ENCODE measurements at regions of chr1 and their contacts with region 1.

Region 1: DNA sequence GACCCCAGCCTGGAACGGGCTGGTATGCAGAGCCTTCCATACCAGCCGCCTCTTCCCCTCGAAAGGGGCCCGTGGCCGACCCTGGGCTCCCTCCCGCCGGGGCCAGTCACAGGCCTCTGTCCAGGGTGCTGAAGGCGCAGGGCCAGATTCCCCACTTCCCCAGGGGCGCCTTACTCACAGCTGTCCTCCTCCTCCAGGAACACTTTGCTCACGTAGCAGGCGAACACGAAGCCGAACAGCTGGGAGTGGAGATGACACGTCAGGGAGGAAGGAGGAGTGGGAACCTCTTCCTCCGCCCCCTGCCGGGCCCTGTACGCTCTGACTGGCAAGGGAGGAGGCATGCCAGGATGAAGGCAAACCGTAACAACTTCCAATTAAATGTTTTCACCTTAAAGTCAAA is 57.3 kb downstream of the NKAIN1 start:
- DNase-seq: peak in 1 of 2 experiments; percentile 95
- H3K4me3 ChIP-seq: peak overlapping the region in 1 of 4 experiments; percentile 44; a peak in 2 of 8 replicates
- H3K27ac ChIP-seq: no peak overlapping the region
- H3K4me1 ChIP-seq: no peaks in the 10 kb centered on the region
- H3K27me3 ChIP-seq: no peaks in the 10 kb centered on the region
- CTCF ChIP-seq: no peak
- EP300 ChIP-seq: no peak
- POLR2A ChIP-seq: no peak
- RAD21 ChIP-seq: no peak; a peak in 1 of 4 replicates

Region 2: DNA sequence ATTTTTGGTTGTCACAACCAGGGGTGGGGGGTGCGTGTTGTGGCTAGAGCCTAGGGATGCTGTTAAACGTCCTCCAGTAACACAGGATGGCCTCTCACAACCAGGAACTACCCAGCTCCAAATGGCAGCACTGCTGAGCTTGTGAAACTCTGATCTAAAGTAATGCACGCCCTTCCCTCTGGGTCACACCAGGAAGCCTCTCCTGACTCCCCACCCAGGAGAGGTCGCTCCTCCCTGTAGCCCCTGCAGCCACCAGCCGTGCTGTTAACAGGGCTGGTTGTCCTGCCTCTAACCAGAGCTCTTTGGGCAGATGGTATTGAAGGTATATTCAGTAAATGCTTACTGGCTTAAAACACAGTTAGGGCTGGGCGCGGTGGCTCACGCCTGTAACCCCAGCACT is 15.9 kb before region 1 on chr1:
- CTCF ChIA-PET with region 1: interaction called, 156 read pairs
- POLR2A ChIA-PET with region 1: interaction called, 4 read pairs
- DNase-seq: no peak
- H3K4me3 ChIP-seq: no peak overlapping the region
- H3K27ac ChIP-seq: no peak overlapping the region
- H3K4me1 ChIP-seq: peaks cover 0 to 7% (median 0%) of the 10 kb centered on the region in 4 experiments; a peak in 2 of 7 replicates
- H3K27me3 ChIP-seq: no peaks in the 10 kb centered on the region
- CTCF ChIP-seq: no peak
- EP300 ChIP-seq: no peak
- POLR2A ChIP-seq: no peak
- RAD21 ChIP-seq: no peak

Region 3: GRCh38 chr1:31216016-31216415 is 33.7 kb after region 1 on chr1:
- CTCF ChIA-PET with region 1: interaction called, 53 read pairs
- POLR2A ChIA-PET with region 1: no interaction called
- DNase-seq: no peak
- H3K4me3 ChIP-seq: no peak overlapping the region
- H3K27ac ChIP-seq: no peak overlapping the region
- H3K4me1 ChIP-seq: peaks cover 0 to 9% (median 2%) of the 10 kb centered on the region in 4 experiments; a peak in 5 of 7 replicates
- H3K27me3 ChIP-seq: no peaks in the 10 kb centered on the region
- CTCF ChIP-seq: no peak
- EP300 ChIP-seq: no peak
- POLR2A ChIP-seq: no peak
- RAD21 ChIP-seq: no peak

Region 4: DNA sequence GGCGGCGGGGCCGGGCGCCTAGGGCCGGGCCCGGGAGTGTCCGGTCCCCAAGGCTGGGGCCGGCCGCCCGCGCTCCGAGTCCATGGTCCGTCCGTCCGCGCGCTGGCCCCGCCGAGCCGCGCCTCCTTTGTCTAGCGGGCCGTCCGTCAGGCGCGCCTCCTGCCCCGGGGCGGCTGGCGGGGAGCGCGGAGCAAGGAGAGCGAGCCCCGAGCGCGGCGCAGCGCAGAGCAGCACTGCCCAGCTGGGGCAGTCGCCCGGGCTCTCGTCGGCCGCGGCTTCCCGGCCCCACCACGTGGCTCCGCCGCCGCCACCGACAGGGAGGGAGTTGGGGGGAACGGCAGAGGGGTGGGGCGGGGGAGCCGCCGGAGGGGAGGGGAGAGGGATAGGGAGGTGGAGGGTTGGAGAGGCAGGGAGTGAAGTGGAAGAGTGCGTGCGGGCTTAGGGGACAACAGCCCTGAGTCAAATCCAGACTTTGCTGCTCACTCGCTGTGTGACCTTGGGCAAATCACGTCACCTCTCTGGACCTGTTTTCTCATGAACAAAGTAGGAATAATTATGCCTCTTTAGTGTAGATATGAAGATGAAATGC is 57.4 kb after region 1 on chr1 and contains the start of gene NKAIN1:
- CTCF ChIA-PET with region 1: interaction called, 146 read pairs
- POLR2A ChIA-PET with region 1: interaction called, 8 read pairs
- DNase-seq: peak; percentile 19 to 75
- H3K4me3 ChIP-seq: peak within 1 kb of the TSS; percentile 75 to 79 (median 78)
- H3K27ac ChIP-seq: no peak within 1 kb of the TSS
- H3K4me1 ChIP-seq: peaks cover 5 to 12% (median 6%) of the 10 kb centered on the region in 4 experiments; a peak in 6 of 7 replicates
- H3K27me3 ChIP-seq: peaks cover 0 to 22% (median 12%) of the 10 kb centered on the region in 4 experiments; a peak in 5 of 7 replicates
- CTCF ChIP-seq: no peak
- EP300 ChIP-seq: no peak
- POLR2A ChIP-seq: peak in 1 of 2 experiments; percentile 63; a peak in 1 of 3 replicates
- RAD21 ChIP-seq: no peak
- total RNA-seq, gene NKAIN1: 59.1 and 59.3 TPM in 2 replicates

Region 5: DNA sequence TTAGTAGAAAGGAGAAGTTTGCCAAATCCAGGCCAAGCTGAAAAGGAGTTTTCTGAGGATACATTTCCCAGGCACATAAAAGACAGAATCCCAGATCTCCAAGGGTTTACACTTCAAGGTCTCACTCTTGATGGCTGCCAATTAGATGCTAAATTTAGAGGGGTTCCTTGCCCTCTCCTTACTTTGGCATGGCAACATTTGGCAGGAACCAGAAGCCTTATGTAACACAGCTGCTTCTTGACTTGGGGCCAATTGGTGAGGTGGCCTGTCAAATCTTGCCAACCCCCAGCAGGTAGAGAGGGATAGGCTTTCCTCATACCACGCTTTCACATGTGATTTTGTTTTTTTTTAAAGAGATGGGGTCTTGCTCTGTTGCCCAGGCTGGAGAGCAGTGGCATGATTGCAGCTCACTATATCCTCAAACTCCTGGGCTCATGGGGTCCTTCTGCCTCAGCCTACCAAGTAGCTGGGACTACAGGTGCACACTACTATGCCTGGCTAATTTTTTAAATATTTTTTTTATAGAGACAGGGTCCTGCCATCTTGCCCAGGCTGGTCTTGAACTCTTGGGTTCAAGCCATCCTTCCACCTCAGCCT is 82.5 kb after region 1 on chr1:
- CTCF ChIA-PET with region 1: interaction called, 113 read pairs
- POLR2A ChIA-PET with region 1: interaction called, 4 read pairs
- DNase-seq: no peak
- H3K4me3 ChIP-seq: no peak overlapping the region
- H3K27ac ChIP-seq: no peak overlapping the region
- H3K4me1 ChIP-seq: no peaks in the 10 kb centered on the region
- H3K27me3 ChIP-seq: no peaks in the 10 kb centered on the region
- CTCF ChIP-seq: no peak
- EP300 ChIP-seq: no peak
- POLR2A ChIP-seq: no peak
- RAD21 ChIP-seq: no peak

Region 6: GRCh38 chr1:31296486-31297276 is 114.3 kb after region 1 on chr1 and contains the starts of genes SNRNP40 and ZCCHC17:
- CTCF ChIA-PET with region 1: interaction called, 7 read pairs
- POLR2A ChIA-PET with region 1: interaction called, 10 read pairs
- DNase-seq: peak; percentile 91 to 96
- H3K4me3 ChIP-seq: peak within 1 kb of the TSS; percentile 90 to 99 (median 93)
- H3K27ac ChIP-seq: peak within 1 kb of the TSS; percentile 97
- H3K4me1 ChIP-seq: peaks cover 0 to 8% (median 4%) of the 10 kb centered on the region in 4 experiments; a peak in 4 of 7 replicates
- H3K27me3 ChIP-seq: no peaks in the 10 kb centered on the region
- CTCF ChIP-seq: no peak
- EP300 ChIP-seq: no peak
- POLR2A ChIP-seq: peak; percentile 88 to 97
- RAD21 ChIP-seq: no peak
- total RNA-seq, gene SNRNP40: 111 and 113 TPM in 2 replicates
- total RNA-seq, gene ZCCHC17: 55.5 and 59.3 TPM in 2 replicates